ENCODE measurements at regions of chr12 and their contacts with region 1.

Region 1: DNA sequence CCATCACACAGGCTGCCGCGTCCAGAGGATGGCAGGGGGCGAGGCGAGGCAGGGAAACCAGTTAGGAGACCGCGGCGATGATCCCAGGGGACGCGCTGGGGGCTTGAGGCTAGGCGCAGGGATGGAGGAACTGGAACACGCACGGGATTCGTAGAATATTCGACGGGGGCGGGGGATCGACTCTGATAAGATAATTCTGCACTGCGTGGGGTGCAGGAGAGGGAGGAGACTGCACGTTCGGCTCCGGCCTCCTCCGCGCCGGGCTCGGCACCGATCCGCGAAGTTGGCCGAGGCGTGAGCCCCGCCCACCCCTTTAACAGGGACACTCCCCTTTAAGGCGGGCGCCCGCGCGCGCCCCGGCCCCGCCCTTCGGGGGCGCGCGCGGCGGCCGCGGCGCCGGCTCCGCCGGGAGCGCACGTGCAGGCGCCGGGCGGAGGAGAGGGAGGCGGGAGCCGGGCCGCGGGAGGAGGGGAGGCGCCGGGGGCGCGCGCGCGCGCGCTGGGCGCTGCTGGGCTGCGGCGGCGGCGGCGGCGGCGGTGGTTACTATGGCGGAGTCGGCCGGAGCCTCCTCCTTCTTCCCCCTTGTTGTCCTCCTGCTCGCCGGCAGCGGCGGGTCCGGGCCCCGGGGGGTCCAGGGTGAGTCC is at the start of gene ACVR1B:
- DNase-seq: peak; percentile 83
- H3K4me3 Mint-ChIP-seq: peak within 1 kb of the TSS; percentile 89
- H3K27ac Mint-ChIP-seq: peak within 1 kb of the TSS; percentile 67
- H3K4me1 Mint-ChIP-seq: peaks cover 51% of the 10 kb centered on the region
- H3K27me3 Mint-ChIP-seq: peaks cover 40% of the 10 kb centered on the region
- total RNA-seq, gene ACVR1B: 11.4 and 12.0 TPM in 2 replicates

Region 2: DNA sequence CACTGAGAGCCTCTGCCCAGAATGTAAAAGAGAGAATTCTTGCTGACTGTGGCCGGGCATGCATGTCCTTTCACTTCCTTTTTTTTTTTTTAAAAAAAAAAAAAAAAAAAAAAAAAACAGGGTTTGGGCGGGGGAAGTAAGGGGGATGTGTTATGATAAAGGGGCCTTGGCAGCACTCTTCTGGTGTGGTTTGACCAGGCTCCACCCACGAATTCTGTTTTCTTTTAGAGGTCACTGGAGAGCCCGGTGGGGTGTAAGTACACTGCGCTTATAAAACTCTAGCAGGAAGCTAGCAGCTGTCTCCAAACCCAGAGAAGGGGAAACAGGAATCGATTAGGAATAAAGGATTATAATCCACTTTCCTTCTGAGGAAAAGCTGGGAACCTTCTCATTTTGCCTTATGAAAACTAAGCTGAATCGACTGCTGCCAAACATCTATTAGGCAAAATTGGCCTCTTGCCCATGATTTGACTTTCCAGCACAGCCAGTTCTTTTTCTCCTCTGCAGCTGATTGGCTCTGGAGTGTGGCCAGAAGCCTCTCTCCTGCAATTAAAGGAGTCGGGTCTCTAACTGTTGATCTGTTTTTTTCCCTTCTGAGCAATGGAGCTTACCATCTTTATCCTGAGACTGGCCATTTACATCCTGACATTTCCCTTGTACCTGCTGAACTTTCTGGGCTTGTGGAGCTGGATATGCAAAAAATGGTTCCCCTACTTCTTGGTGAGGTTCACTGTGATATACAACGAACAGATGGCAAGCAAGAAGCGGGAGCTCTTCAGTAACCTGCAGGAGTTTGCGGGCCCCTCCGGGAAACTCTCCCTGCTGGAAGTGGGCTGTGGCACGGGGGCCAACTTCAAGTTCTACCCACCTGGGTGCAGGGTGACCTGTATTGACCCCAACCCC is 1026.6 kb before region 1 on chr12:
- intact Hi-C with region 1: no loop called
- DNase-seq: peak; percentile 3
- H3K4me3 Mint-ChIP-seq: peak overlapping the region; percentile 70
- H3K27ac Mint-ChIP-seq: peak overlapping the region; percentile 64
- H3K4me1 Mint-ChIP-seq: peaks cover 27% of the 10 kb centered on the region
- H3K27me3 Mint-ChIP-seq: no peaks in the 10 kb centered on the region

Region 3: DNA sequence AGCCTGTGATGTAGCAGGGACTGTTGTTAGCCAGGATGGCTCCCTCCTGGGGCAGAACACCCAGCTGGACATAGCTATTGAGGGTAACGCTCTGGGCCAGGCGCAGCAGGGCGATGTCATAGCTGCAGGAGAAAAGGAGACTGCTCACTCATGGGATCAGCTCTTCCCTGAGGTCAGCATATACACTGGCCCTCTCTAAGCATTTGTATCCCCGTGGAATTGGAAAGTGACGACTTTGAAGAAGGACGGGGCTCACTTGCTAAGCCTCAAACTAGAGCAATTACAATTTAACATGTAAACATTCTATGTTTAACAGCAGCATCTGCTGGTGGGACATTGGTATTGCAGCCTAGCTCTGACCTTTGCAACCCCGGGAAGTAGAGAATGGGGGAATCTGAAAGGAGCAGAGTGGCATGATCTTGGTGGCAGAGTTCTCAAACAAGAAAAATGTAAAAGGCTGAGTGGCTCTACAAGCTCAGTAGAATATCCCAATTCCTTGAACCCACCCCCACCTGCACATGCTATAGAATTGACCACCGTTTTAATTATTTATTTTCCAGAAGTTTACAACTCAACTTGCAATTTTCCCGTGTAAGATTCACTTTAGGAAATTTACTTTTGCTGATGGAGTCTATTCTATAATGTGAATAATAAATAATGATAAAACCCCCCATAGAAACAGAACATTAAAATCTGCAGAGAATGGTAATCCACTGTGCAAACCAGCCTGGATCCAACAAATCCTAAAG is 609.9 kb before region 1 on chr12:
- intact Hi-C with region 1: no loop called
- DNase-seq: peak; percentile 63
- H3K4me3 Mint-ChIP-seq: no peak overlapping the region
- H3K27ac Mint-ChIP-seq: no peak overlapping the region
- H3K4me1 Mint-ChIP-seq: peaks cover 12% of the 10 kb centered on the region
- H3K27me3 Mint-ChIP-seq: peaks cover 6% of the 10 kb centered on the region

Region 4: GRCh38 chr12:51368640-51369517 is 582.4 kb before region 1 on chr12:
- intact Hi-C with region 1: loop called (anchors 5 kb)
- DNase-seq: peak; percentile 89
- H3K4me3 Mint-ChIP-seq: peak overlapping the region; percentile 56
- H3K27ac Mint-ChIP-seq: peak overlapping the region; percentile 70
- H3K4me1 Mint-ChIP-seq: peaks cover 67% of the 10 kb centered on the region
- H3K27me3 Mint-ChIP-seq: peaks cover 7% of the 10 kb centered on the region

Region 5: DNA sequence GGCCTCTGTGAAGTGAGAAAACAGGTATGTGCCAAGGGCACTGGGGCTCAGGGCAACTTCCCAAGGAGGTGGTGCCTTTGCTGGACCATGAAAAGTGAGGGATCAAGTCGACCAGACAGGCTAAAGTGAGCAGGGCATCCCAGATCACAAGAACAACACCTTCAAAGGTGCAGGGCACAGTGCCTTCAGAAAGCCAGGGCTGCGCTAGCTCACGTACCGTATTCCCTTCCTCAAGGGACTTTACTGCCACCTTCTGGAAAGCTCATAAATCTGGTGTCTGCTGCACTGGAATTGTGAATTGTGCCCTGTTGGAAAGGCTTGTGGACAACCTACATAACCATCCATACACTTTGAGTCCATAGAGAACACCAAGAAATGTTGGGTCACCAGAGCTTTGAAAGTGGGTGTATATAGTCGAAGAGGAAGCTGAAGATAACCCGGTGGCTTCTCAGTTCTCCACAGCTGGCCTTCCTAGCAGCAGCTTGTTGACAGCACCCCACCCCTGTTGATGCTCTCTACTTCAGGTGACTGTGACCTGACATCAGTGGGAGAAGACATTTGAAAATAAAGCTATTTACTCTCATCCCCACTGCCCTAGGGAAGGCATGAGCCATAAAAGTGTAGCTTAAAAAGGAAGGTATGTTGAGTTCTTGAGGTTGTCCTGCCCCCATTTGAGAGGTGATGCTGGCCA is 127.3 kb before region 1 on chr12:
- intact Hi-C with region 1: loop called (anchors 2 kb)
- DNase-seq: no peak
- H3K4me3 Mint-ChIP-seq: no peak overlapping the region
- H3K27ac Mint-ChIP-seq: no peak overlapping the region
- H3K4me1 Mint-ChIP-seq: peaks cover 22% of the 10 kb centered on the region
- H3K27me3 Mint-ChIP-seq: peaks cover 33% of the 10 kb centered on the region

Region 6: GRCh38 chr12:51926718-51927117 is 24.6 kb before region 1 on chr12:
- intact Hi-C with region 1: loop called (anchors 2 kb)
- DNase-seq: peak; percentile 24
- H3K4me3 Mint-ChIP-seq: no peak overlapping the region
- H3K27ac Mint-ChIP-seq: no peak overlapping the region
- H3K4me1 Mint-ChIP-seq: peaks cover 13% of the 10 kb centered on the region
- H3K27me3 Mint-ChIP-seq: peaks cover 13% of the 10 kb centered on the region

Region 7: GRCh38 chr12:51938726-51939125 is 12.6 kb before region 1 on chr12:
- intact Hi-C with region 1: no loop called
- DNase-seq: no peak
- H3K4me3 Mint-ChIP-seq: no peak overlapping the region
- H3K27ac Mint-ChIP-seq: no peak overlapping the region
- H3K4me1 Mint-ChIP-seq: no peaks in the 10 kb centered on the region
- H3K27me3 Mint-ChIP-seq: peaks cover 25% of the 10 kb centered on the region

Region 8: GRCh38 chr12:52006726-52007157 is 55.4 kb after region 1 on chr12 and contains the start of gene TAMALIN:
- intact Hi-C with region 1: loop called (anchors 1 kb)
- DNase-seq: peak; percentile 70
- H3K4me3 Mint-ChIP-seq: peak within 1 kb of the TSS; percentile 84
- H3K27ac Mint-ChIP-seq: peak within 1 kb of the TSS; percentile 67
- H3K4me1 Mint-ChIP-seq: peaks cover 13% of the 10 kb centered on the region
- H3K27me3 Mint-ChIP-seq: peaks cover 38% of the 10 kb centered on the region
- total RNA-seq, gene TAMALIN: 8.9 and 12.8 TPM in 2 replicates

Region 9: GRCh38 chr12:52050761-52051541 is 99.6 kb after region 1 on chr12 and contains the start of gene NR4A1:
- intact Hi-C with region 1: loop called (anchors 1 kb)
- DNase-seq: peak; percentile 96
- H3K4me3 Mint-ChIP-seq: peak within 1 kb of the TSS; percentile 96
- H3K27ac Mint-ChIP-seq: peak within 1 kb of the TSS; percentile 92
- H3K4me1 Mint-ChIP-seq: peaks cover 42% of the 10 kb centered on the region
- H3K27me3 Mint-ChIP-seq: no peaks in the 10 kb centered on the region
- total RNA-seq, gene NR4A1: 52.7 and 60.3 TPM in 2 replicates

Region 10: GRCh38 chr12:52249051-52249461 is 297.7 kb after region 1 on chr12:
- intact Hi-C with region 1: no loop called
- DNase-seq: no peak
- H3K4me3 Mint-ChIP-seq: peak overlapping the region; percentile 48
- H3K27ac Mint-ChIP-seq: peak overlapping the region; percentile 72
- H3K4me1 Mint-ChIP-seq: peaks cover 89% of the 10 kb centered on the region
- H3K27me3 Mint-ChIP-seq: no peaks in the 10 kb centered on the region

Measured in activated T-helper 1 cell treated with anti-CD3 and anti-CD28 coated beads, Interleukin-12 subunit alpha, Interleukin-12 subunit beta, Interleukin-2, Interleukin-4 antibody, amounts not matched to agents 30 ng/mL and 10 ng/mL and 1 ng/mL, durations not matched to agents 14 hours and 24 hours and 36 hours (primary cell).